ENCODE measurements at regions of chr4 and their contacts with region 1.

Region 1: DNA sequence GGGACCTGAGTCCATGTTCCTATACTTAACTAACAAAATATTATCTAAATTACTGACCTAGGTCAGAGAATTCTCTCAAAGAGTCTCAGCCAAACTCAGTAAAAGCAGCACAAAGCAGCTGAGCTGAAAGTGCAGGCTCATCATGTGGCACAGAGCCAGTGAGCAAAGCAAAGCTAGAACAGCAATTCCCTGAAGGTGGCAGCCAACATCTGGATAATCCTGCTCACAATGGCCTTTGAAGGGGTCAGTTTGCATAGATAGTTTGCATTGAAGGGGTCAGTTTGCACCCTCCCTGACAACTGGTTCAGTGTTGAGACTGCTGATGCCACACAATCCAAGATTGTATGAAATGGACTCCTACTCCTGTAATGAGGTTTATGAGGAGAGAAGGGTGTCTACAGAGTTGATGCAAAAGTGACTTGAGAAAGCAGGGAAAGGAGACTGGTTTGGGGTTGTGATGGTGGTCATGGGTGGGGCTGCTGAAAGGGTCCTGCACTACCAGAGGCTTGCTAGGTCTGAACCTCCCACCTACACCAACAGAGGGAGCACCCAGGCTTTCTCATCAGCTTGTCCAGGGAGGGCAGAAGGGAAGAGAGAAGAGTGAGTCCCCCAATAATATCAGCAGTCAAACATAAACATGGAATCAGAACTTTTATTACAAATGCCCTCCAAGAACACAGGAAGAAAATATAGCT is 39.7 kb downstream of the TRIM61 start:
- DNase-seq: no peak
- H3K4me3 ChIP-seq: no peak overlapping the region
- H3K27ac ChIP-seq: no peak overlapping the region
- H3K4me1 ChIP-seq: no peaks in the 10 kb centered on the region; a peak in 1 of 7 replicates
- H3K27me3 ChIP-seq: no peaks in the 10 kb centered on the region
- CTCF ChIP-seq: peak; percentile 44 to 67 (median 57)
- EP300 ChIP-seq: no peak
- POLR2A ChIP-seq: no peak
- RAD21 ChIP-seq: peak; percentile 56 to 58

Region 2: DNA sequence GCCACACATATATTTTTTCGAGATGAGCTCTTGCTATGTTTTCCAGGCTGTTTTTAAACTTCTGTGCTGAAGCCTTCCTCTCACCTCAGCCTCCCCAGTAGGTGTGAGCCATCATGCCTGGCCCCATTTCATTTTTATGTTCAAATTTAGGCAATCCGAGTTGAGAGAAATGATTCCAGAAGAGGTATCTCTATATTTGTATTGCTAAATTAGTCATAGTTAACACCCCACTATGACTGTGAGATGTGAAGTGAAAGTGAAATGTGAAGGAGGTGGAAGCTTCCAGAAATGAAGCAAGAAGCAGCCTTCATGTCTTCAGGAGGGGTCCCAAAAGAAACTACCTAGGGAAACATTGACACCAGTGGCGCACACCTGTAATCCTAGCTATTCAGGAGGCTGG is 43.0 kb before region 1 on chr4:
- CTCF ChIA-PET with region 1: interaction called, 7 read pairs
- POLR2A ChIA-PET with region 1: interaction called, 11 read pairs
- DNase-seq: no peak
- H3K4me3 ChIP-seq: no peak overlapping the region
- H3K27ac ChIP-seq: no peak overlapping the region
- H3K4me1 ChIP-seq: peaks cover 0 to 3% (median 1%) of the 10 kb centered on the region in 4 experiments; a peak in 2 of 7 replicates
- H3K27me3 ChIP-seq: no peaks in the 10 kb centered on the region
- CTCF ChIP-seq: no peak
- EP300 ChIP-seq: no peak
- POLR2A ChIP-seq: no peak
- RAD21 ChIP-seq: no peak

Region 3: GRCh38 chr4:164956766-164957643 is 19.3 kb after region 1 on chr4:
- CTCF ChIA-PET with region 1: interaction called, 279 read pairs
- POLR2A ChIA-PET with region 1: no interaction called
- DNase-seq: peak; percentile 54 to 69
- H3K4me3 ChIP-seq: peak overlapping the region; percentile 64 to 76 (median 72)
- H3K27ac ChIP-seq: no peak overlapping the region
- H3K4me1 ChIP-seq: peaks cover 0 to 2% (median 0%) of the 10 kb centered on the region in 4 experiments; a peak in 1 of 7 replicates
- H3K27me3 ChIP-seq: no peaks in the 10 kb centered on the region
- CTCF ChIP-seq: no peak
- EP300 ChIP-seq: no peak
- POLR2A ChIP-seq: peak in 1 of 2 experiments; percentile 88; a peak in 2 of 3 replicates
- RAD21 ChIP-seq: no peak

Region 4: GRCh38 chr4:165016971-165017370 is 79.2 kb after region 1 on chr4:
- CTCF ChIA-PET with region 1: interaction called, 15 read pairs
- POLR2A ChIA-PET with region 1: no interaction called
- DNase-seq: peak in 1 of 2 experiments; percentile 66
- H3K4me3 ChIP-seq: no peak overlapping the region
- H3K27ac ChIP-seq: no peak overlapping the region
- H3K4me1 ChIP-seq: no peaks in the 10 kb centered on the region
- H3K27me3 ChIP-seq: no peaks in the 10 kb centered on the region
- CTCF ChIP-seq: peak; percentile 45 to 82 (median 71); a peak in 3 of 4 replicates
- EP300 ChIP-seq: no peak
- POLR2A ChIP-seq: no peak
- RAD21 ChIP-seq: peak; percentile 45 to 62

Region 5: GRCh38 chr4:165096776-165097175 is 159.1 kb after region 1 on chr4:
- CTCF ChIA-PET with region 1: interaction called, 17 read pairs
- POLR2A ChIA-PET with region 1: no interaction called
- DNase-seq: no peak
- H3K4me3 ChIP-seq: no peak overlapping the region
- H3K27ac ChIP-seq: no peak overlapping the region
- H3K4me1 ChIP-seq: no peaks in the 10 kb centered on the region
- H3K27me3 ChIP-seq: no peaks in the 10 kb centered on the region
- CTCF ChIP-seq: peak in 2 of 3 experiments; percentile 40 to 50; a peak in 2 of 4 replicates
- EP300 ChIP-seq: no peak
- POLR2A ChIP-seq: no peak
- RAD21 ChIP-seq: peak; percentile 64 to 65

Region 6: DNA sequence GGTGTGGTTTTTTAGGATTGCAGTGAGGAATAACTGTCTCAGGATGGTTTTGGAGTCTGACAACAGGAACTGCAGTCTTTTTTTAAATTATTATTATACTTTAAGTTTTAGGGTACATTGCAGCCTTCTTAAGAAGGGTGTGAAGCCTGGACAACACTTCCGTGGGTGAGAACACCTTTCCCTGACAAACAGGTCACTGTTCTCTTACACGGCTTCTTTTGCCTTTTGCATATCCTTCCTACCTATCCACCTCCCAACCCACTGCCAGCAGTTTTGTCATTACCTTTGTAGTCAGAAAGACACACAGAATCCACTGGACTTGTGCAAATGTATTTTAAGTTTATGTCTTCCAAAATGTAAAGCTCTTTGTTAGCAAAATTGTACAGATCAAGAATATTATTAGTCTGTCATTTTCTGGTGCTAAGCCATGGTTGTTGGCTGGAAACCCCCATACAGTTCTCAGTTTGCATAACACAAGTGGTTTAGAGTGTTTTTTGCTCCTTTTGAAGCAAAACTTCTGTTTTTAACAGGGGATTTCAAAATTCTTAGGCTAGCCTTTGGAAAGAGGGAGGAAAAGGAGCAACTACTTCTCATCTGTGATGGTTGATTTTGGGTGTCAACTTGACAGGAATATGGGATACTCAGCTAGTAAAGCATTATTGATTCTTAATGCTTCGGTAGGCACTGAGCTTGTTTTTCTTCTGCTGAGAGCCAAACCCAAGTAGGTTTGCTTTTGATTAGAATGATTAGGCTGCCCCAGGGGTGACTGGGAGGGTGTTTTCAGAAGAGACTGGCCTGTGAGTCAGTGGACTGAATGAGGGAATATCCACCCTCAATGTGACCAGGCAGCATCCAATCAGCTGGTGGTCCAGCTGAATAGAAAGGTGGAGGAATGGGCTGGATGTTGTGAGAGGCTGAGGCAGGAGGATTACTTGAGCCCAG is 240.3 kb after region 1 on chr4:
- CTCF ChIA-PET with region 1: no interaction called
- POLR2A ChIA-PET with region 1: no interaction called
- DNase-seq: no peak
- H3K4me3 ChIP-seq: no peak overlapping the region
- H3K27ac ChIP-seq: no peak overlapping the region
- H3K4me1 ChIP-seq: no peaks in the 10 kb centered on the region
- H3K27me3 ChIP-seq: no peaks in the 10 kb centered on the region
- CTCF ChIP-seq: no peak
- EP300 ChIP-seq: no peak
- POLR2A ChIP-seq: no peak
- RAD21 ChIP-seq: no peak

Measured in H1 (cell line).